Left cardiac atrium (tissue), 4 donors: ENCODE measurements at regions of chr16 and their contacts with region 1.

Region 1: DNA sequence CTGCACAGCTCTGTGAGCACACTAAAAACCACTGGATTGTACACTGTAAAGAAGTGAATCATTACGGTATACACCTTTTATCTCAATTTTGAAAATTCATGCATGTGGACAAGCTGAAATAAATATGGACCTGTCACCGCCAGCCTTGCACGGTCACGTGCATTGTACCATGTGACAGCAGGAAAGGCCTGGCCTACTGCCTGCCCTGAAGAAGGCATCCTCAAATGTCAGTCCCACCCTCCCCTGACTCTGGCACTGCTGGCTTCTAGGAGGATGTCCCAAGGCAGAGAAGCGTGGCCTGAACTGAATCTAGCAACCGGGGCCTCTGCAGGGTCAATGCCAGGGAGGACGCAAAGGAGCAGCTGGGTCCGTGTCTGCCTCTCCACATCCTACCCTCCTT is 34.6 kb downstream of the SLC38A8 start:
- DNase-seq: no peak
- ATAC-seq: peak in 1 of 2 donors; percentile 66

Region 2: GRCh38 chr16:84036982-84037425 is 29.0 kb after region 1 on chr16:
- intact Hi-C with region 1: loop called in 1 of 2 experiments (anchors 2 kb)
- DNase-seq: no peak
- ATAC-seq: peak; percentile 38 to 49